Activated CD4-positive, alpha-beta T cell treated with anti-CD3 and anti-CD28 coated beads, Interleukin-2, amount 10 ng/mL, durations not matched to agents 24 days and 14 days (primary cell): ENCODE measurements at regions of chr2 and their contacts with region 1.

Region 1: DNA sequence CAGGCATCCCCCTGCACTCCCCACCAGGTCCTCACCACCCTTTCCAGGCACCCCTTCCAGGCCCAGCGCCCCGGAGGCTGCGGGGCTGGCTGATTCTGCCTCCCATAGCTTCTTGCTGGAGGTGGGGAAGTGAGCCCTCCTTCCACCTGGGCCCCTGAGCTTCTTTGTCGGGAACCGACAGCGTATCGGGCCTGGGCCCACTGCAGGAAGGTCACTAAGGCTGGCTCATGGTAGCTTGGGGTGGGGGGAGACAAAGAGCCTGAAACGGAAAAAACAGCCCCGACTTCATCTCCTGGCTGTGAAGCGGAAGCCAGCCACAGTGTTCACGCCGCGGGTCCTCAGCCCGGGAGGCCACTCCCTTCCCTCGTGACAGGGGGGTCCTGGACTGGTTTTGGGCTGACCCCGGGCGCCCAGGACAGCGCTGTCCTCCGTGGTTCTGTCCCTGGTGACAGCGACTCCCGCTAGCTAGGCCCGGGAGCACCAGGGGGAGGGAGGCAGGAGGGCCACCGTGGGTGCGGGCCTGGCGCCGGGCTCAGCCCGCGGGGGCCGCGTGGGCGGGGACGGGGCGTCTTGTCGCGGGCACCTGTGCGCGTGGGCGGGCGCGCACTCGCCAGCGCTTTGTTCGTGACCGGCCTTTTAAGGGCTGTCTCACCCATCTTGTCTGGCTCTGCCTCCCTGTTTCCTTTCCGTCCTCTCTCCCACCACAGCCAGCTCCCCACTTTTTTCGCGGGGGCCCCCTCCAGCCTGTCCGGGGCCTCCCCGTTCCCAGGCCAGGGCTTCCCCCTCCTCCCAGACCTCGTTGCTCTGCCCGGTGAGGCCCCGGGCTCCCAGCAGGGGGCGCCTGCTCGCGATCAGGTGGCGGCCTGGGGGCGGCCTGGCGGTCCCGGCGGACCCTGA is 64.9 kb downstream of the DNMT3A start:
- DNase-seq: peak; percentile 94
- H3K4me3 Mint-ChIP-seq: peak overlapping the region; percentile 64
- H3K27ac Mint-ChIP-seq: peak overlapping the region; percentile 90
- H3K4me1 Mint-ChIP-seq: peaks cover 63% of the 10 kb centered on the region
- H3K27me3 Mint-ChIP-seq: no peaks in the 10 kb centered on the region

Region 2: GRCh38 chr2:25251422-25252273 is 25.2 kb before region 1 on chr2:
- intact Hi-C with region 1: loop called (anchors 2 kb)
- DNase-seq: peak; percentile 86
- H3K4me3 Mint-ChIP-seq: peak overlapping the region; percentile 79
- H3K27ac Mint-ChIP-seq: peak overlapping the region; percentile 83
- H3K4me1 Mint-ChIP-seq: peaks cover 32% of the 10 kb centered on the region
- H3K27me3 Mint-ChIP-seq: no peaks in the 10 kb centered on the region

Region 3: GRCh38 chr2:25294573-25295462 is 18.0 kb after region 1 on chr2:
- intact Hi-C with region 1: loop called (anchors 2 kb)
- DNase-seq: peak; percentile 95
- H3K4me3 Mint-ChIP-seq: peak overlapping the region; percentile 80
- H3K27ac Mint-ChIP-seq: peak overlapping the region; percentile 95
- H3K4me1 Mint-ChIP-seq: peaks cover 43% of the 10 kb centered on the region
- H3K27me3 Mint-ChIP-seq: no peaks in the 10 kb centered on the region

Region 4: GRCh38 chr2:25314514-25315315 is 37.9 kb after region 1 on chr2:
- intact Hi-C with region 1: loop called (anchors 2 kb)
- DNase-seq: peak; percentile 94
- H3K4me3 Mint-ChIP-seq: peak overlapping the region; percentile 91
- H3K27ac Mint-ChIP-seq: peak overlapping the region; percentile 97
- H3K4me1 Mint-ChIP-seq: peaks cover 44% of the 10 kb centered on the region
- H3K27me3 Mint-ChIP-seq: no peaks in the 10 kb centered on the region

Region 5: GRCh38 chr2:25567406-25567805 is 290.6 kb after region 1 on chr2:
- intact Hi-C with region 1: no loop called
- DNase-seq: peak; percentile 80
- H3K4me3 Mint-ChIP-seq: no peak overlapping the region
- H3K27ac Mint-ChIP-seq: no peak overlapping the region
- H3K4me1 Mint-ChIP-seq: peaks cover 12% of the 10 kb centered on the region
- H3K27me3 Mint-ChIP-seq: no peaks in the 10 kb centered on the region

Region 6: DNA sequence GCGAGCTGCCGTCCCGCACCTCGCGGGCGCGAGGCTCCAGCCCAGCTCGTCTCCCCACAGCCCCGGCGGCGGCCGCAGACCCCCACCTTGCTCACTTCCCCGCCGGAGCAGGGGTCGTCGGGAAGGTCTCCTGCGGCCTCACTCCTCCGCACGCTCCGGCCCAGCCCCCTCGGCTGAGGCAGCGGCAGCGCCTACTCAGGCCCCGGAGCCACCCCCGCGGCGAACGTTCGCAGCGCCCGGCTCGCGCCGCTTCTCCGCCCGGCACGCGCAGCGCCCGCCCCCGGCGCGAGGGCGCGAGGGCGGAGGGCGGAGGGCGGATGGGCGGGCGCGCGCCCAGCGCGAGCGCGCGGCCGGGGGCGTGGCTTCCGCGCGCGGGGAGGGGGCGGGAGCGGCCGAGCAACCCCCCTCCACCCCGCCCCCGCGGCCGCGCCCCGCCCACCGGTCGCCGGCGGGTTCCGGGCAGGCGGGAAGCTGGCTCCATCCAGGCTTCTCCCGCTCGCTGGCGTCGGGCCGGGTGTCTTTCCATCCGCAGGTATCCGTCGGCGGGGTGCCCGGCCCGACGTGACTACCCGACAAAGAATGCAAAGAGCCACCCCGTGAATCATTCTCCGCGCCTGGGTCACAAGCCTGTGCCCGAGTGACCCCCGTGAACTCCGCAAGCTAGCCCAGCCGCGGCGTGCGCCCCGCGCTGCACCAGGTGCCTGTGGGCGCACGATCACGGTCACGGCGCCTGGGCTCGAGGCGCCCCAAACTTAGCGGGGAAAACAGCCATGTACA is 396.7 kb after region 1 on chr2 and contains the start of gene DTNB:
- intact Hi-C with region 1: loop called (anchors 5 kb)
- DNase-seq: peak; percentile 94
- H3K4me3 Mint-ChIP-seq: peak within 1 kb of the TSS; percentile 86
- H3K27ac Mint-ChIP-seq: peak within 1 kb of the TSS; percentile 85
- H3K4me1 Mint-ChIP-seq: peaks cover 27% of the 10 kb centered on the region
- H3K27me3 Mint-ChIP-seq: peaks cover 24% of the 10 kb centered on the region
- total RNA-seq, gene DTNB: 25.8 and 30.5 TPM in 2 replicates